ENCODE measurements at regions of chr6 and their contacts with region 1.

Region 1: DNA sequence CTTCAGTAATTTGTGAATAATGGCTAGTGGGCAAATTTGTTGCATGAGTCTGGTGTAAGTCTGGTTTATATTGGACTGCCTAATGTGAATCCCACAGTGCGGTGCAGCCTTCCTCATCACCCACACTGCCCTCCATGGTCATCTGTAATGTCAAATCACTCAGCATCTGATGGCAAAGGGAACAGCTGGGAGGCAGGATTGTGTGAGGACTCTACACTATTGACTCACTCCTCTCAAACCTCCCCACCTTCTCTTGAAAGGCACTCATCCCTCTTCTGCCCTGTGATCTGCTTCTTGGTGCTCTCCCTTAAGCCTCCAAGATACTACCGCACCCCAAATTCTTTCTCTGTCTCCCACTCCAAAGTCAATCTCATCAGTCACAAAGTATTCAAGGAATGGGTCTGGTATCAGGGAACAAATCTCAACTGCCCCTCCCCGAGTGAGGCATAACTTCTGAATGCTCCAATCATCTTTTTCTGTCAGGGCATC is 146.0 kb upstream of the BEND6 start:
- DNase-seq: peak; percentile 21 to 80
- ATAC-seq: peak; percentile 95 to 97
- H3K4me3 ChIP-seq: no peak overlapping the region
- H3K27ac ChIP-seq: peak overlapping the region; percentile 26 to 67; a peak in 5 of 6 replicates
- H3K4me1 ChIP-seq: peaks cover 75% of the 10 kb centered on the region
- CTCF ChIP-seq: no peak
- EP300 ChIP-seq: no peak
- POLR2A ChIP-seq: no peak
- RAD21 ChIP-seq: no peak

Region 2: DNA sequence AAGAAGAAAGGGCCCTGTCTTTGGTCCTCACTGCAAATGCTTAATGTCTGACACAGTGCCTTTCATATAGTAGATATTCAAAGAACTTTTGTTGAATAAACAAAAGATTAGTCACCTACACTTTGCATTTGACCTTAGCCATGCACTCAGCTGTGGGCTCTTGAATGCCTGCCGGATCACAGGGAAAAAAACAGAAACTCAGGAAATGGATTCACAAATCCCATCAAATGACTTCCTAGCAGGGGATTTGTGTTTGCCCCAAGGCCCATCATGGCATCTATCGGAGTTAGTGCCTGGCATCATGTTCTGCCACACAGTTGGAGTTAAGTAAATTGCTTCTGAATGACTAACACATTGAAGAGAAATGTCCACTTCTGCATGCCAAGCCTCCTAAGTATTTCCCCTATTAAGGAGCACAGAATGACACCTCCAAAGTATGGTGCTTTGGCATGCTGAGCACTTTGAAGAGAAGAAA is 93.9 kb before region 1 on chr6:
- CTCF ChIA-PET with region 1: no interaction called
- POLR2A ChIA-PET with region 1: interaction called, 13 read pairs
- DNase-seq: peak in 1 of 2 experiments; percentile 68
- ATAC-seq: peak; percentile 73 to 80
- H3K4me3 ChIP-seq: no peak overlapping the region
- H3K27ac ChIP-seq: peak overlapping the region; percentile 75 to 87
- H3K4me1 ChIP-seq: peaks cover 56% of the 10 kb centered on the region
- CTCF ChIP-seq: no peak
- EP300 ChIP-seq: no peak
- POLR2A ChIP-seq: no peak
- RAD21 ChIP-seq: no peak

Region 3: GRCh38 chr6:56796196-56796532 is 12.8 kb before region 1 on chr6:
- CTCF ChIA-PET with region 1: no interaction called
- POLR2A ChIA-PET with region 1: no interaction called
- DNase-seq: peak; percentile 12 to 22
- ATAC-seq: peak; percentile 56 to 67; a peak in 5 of 6 replicates
- H3K4me3 ChIP-seq: peak overlapping the region; percentile 20; the same call in 2 of the 3 replicates
- H3K27ac ChIP-seq: peak overlapping the region; percentile 59 to 80
- H3K4me1 ChIP-seq: peaks cover 75% of the 10 kb centered on the region
- CTCF ChIP-seq: no peak
- EP300 ChIP-seq: no peak
- POLR2A ChIP-seq: no peak
- RAD21 ChIP-seq: no peak

Region 4: DNA sequence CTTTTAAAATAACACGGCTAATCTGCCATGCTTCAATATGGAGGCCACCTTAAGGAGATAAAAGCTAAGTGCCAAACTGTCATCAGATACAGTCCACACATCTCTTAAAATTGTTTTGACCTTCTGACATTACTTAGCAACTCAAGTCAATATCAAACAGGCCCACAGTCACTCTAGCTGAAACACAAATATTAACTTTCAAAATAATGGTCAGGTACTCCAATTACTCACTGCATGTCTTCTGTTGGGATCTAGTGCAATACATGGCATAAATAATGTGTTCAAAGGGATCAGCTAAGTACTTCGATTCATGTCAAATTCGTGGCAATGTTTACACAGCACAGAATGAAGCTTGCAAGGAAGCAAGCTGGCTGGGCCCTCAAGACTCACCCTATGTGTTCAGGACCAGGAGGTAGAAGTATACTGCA is 12.1 kb after region 1 on chr6:
- CTCF ChIA-PET with region 1: no interaction called
- POLR2A ChIA-PET with region 1: no interaction called
- DNase-seq: no peak
- ATAC-seq: peak in 1 of 2 experiments; percentile 44; a peak in 2 of 6 replicates
- H3K4me3 ChIP-seq: no peak overlapping the region
- H3K27ac ChIP-seq: no peak overlapping the region
- H3K4me1 ChIP-seq: peaks cover 30% of the 10 kb centered on the region
- CTCF ChIP-seq: no peak
- EP300 ChIP-seq: no peak
- POLR2A ChIP-seq: no peak
- RAD21 ChIP-seq: no peak

Measured in A549 (cell line).